GM12878 (cell line): ENCODE measurements at regions of chr6 and their contacts with region 1.

Region 1: DNA sequence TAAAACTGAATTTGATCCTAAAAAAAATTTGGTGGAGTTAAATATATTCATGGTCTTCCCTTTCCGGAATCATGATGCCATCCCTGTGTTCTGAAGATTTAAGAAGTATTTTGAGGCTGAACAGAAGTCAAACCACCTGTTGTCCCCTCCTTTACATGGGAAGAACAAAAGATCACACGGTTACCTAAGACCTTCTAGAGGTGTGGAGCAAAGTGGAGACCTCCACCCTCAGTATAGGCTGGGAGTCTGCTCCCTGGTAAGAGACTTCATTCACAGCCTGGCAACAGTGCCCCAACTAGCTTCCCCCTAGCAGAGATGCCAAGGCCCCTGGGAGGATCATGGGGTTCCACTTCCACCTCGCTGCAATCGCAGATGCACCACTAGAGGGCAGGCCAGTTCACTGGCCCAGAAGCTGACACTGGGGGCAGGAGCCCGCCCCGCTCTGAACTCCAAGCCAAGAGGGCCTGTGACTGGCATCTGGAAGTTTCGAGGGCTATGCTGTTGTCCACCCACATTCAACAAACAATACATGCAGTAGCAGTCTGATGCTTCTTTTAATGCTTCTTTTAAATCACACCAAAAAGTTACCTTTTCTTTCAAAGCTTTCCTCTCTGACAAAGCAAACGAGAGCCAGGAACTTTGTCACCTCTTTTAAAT is 19.5 kb upstream of the UBE2J1 start:
- DNase-seq: no peak
- ATAC-seq: peak; percentile 89
- H3K4me3 ChIP-seq: no peak overlapping the region
- H3K27ac ChIP-seq: peak overlapping the region; percentile 52
- H3K4me1 ChIP-seq: peaks cover 28% of the 10 kb centered on the region
- H3K27me3 ChIP-seq: no peaks in the 10 kb centered on the region
- CTCF ChIP-seq: peak; percentile 97 to 99 (median 99)
- EP300 ChIP-seq: no peak
- POLR2A ChIP-seq: no peak
- RAD21 ChIP-seq: peak; percentile 85

Region 2: DNA sequence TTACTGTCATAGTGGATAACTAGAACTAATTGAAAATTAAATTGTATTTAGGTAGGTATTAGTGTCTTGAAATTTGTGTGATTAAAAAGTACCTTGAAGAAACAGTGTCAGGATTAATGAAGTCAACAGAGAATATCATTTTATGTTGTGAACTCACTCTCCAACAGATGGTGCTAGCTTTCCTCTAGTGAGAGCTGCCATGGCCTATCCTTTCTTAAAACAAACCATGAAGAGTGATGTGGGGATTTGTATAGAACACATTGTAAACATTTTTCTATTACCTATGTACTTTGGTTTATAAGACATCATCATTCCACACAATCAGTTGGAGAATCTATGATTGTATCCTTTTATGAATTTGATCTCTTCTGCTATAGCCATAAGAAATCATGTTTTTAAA is 249.4 kb before region 1 on chr6:
- CTCF ChIA-PET with region 1: interaction called, 4 read pairs
- POLR2A ChIA-PET with region 1: no interaction called
- RAD21 ChIA-PET with region 1: interaction called, 9 read pairs
- SMC1A ChIA-PET with region 1: interaction called, 10 read pairs
- in situ Hi-C with region 1: no loop called
- intact Hi-C with region 1: loop called (anchors 1 kb)
- DNase-seq: no peak
- ATAC-seq: peak; percentile 87
- H3K4me3 ChIP-seq: no peak overlapping the region
- H3K27ac ChIP-seq: no peak overlapping the region
- H3K4me1 ChIP-seq: no peaks in the 10 kb centered on the region
- H3K27me3 ChIP-seq: peaks cover 0 to 4% of the 10 kb centered on the region in 2 experiments; a peak in 1 of 4 replicates
- CTCF ChIP-seq: peak; percentile 50 to 78 (median 52); a peak in 5 of 6 replicates
- EP300 ChIP-seq: no peak
- POLR2A ChIP-seq: no peak
- RAD21 ChIP-seq: peak; percentile 87

Region 3: GRCh38 chr6:89297695-89298351 is 74.2 kb before region 1 on chr6:
- CTCF ChIA-PET with region 1: interaction called, 22 read pairs
- POLR2A ChIA-PET with region 1: interaction called, 3 read pairs
- RAD21 ChIA-PET with region 1: interaction called, 14 read pairs
- SMC1A ChIA-PET with region 1: interaction called, 16 read pairs
- in situ Hi-C with region 1: no loop called
- intact Hi-C with region 1: no loop called
- DNase-seq: peak; percentile 80
- ATAC-seq: peak; percentile 87
- H3K4me3 ChIP-seq: peak overlapping the region; percentile 48; the same call in 1 of the 2 replicates
- H3K27ac ChIP-seq: peak overlapping the region; percentile 94
- H3K4me1 ChIP-seq: peaks cover 27% of the 10 kb centered on the region
- H3K27me3 ChIP-seq: no peaks in the 10 kb centered on the region
- CTCF ChIP-seq: no peak
- EP300 ChIP-seq: peak; percentile 87
- POLR2A ChIP-seq: no peak
- RAD21 ChIP-seq: no peak

Region 4: GRCh38 chr6:89360415-89360999 is 11.5 kb before region 1 on chr6:
- CTCF ChIA-PET with region 1: interaction called, 260 read pairs
- POLR2A ChIA-PET with region 1: interaction called, 30 read pairs
- RAD21 ChIA-PET with region 1: interaction called, 187 read pairs
- SMC1A ChIA-PET with region 1: interaction called, 252 read pairs
- in situ Hi-C with region 1: no loop called
- intact Hi-C with region 1: no loop called
- DNase-seq: no peak
- ATAC-seq: peak; percentile 77
- H3K4me3 ChIP-seq: peak overlapping the region; percentile 10; the same call in 1 of the 2 replicates
- H3K27ac ChIP-seq: peak overlapping the region; percentile 90
- H3K4me1 ChIP-seq: peaks cover 64% of the 10 kb centered on the region
- H3K27me3 ChIP-seq: no peaks in the 10 kb centered on the region
- CTCF ChIP-seq: no peak
- EP300 ChIP-seq: peak; percentile 26 to 80; a peak in 2 of 4 replicates
- POLR2A ChIP-seq: no peak
- RAD21 ChIP-seq: no peak

Region 5: GRCh38 chr6:89416796-89417195 is 44.8 kb after region 1 on chr6:
- CTCF ChIA-PET with region 1: interaction called, 20 read pairs
- POLR2A ChIA-PET with region 1: no interaction called
- RAD21 ChIA-PET with region 1: interaction called, 7 read pairs
- SMC1A ChIA-PET with region 1: interaction called, 10 read pairs
- in situ Hi-C with region 1: no loop called
- intact Hi-C with region 1: loop called (anchors 2 kb)
- DNase-seq: no peak
- ATAC-seq: no peak
- H3K4me3 ChIP-seq: no peak overlapping the region
- H3K27ac ChIP-seq: no peak overlapping the region
- H3K4me1 ChIP-seq: no peaks in the 10 kb centered on the region
- H3K27me3 ChIP-seq: no peaks in the 10 kb centered on the region
- CTCF ChIP-seq: no peak
- EP300 ChIP-seq: no peak
- POLR2A ChIP-seq: no peak
- RAD21 ChIP-seq: no peak

Region 6: DNA sequence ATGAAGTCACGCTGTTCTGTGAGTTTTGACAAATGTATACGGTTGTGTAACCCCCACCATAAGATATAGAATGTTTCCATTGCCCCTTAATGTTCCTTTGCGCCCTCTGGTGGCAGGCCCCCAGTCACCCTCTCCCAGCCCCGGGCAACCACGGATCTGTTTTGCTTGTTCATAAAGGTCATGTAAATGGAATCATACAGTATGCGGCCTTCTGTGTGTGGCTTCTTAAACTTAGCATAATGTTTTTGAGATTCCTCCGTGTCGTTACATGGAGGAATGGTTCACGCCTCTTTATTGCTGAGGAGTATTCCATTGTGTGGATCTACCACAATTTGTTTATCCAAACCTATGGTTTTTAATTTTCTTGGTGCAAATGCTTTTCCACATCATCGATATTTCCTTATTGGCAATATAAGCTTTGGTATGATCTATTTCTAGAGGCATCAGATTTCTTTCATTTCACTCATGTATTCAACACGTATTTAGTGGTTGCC is 238.2 kb after region 1 on chr6:
- CTCF ChIA-PET with region 1: interaction called, 58 read pairs
- POLR2A ChIA-PET with region 1: no interaction called
- RAD21 ChIA-PET with region 1: interaction called, 19 read pairs
- SMC1A ChIA-PET with region 1: interaction called, 31 read pairs
- in situ Hi-C with region 1: loop called (anchors 5 kb)
- intact Hi-C with region 1: loop called (anchors 1 kb)
- DNase-seq: peak; percentile 30
- ATAC-seq: peak; percentile 98
- H3K4me3 ChIP-seq: no peak overlapping the region
- H3K27ac ChIP-seq: no peak overlapping the region
- H3K4me1 ChIP-seq: no peaks in the 10 kb centered on the region
- H3K27me3 ChIP-seq: no peaks in the 10 kb centered on the region
- CTCF ChIP-seq: peak; percentile 81 to 93 (median 91)
- EP300 ChIP-seq: no peak
- POLR2A ChIP-seq: no peak
- RAD21 ChIP-seq: peak; percentile 73